ENCODE measurements at regions of chr9 and their contacts with region 1.

Region 1: DNA sequence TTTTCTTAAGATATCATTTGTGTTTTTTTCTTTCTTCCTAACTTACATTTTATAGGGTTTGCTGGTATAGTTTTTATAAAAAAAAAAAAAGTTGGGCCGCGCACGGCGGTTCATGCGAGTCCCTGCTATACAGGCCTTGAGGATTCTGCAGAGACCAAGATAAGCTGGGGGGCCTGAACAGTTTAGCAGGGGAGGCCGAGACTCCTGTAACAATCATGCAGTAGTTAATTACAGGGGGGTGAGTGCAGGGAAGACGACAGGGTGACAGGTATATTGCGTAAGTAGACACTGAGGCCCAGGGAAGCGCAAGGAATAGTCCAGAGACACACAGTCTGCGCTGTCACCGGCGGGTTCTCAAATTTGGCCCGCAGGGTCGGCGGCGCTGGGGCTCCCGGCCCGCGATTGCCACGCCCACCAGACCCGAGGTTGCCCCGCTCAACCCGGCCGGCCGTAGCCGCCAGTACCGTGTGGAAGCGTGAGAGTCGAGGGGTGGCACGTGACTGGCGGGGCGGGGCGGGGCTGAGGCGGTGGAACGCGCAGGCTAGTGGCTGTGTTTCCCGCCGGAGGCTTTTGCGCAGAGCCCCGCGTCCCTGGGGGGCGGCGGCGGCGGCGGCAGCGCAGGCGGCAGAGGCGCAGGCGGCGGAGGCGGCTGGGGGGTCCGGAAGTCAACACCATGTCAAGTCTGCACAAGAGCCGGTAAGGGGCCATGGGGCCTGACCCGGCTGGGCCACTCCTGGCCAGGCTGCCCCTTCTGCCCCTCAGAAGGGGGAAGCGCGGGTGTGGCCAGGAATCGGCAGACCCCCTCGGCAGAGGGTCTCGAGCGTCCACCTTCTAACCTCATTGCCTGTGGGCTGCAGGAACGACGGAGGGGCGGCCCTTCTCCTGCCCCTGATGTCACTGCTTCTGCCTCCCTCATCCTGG is at the start of gene TBC1D13:
- DNase-seq: peak; percentile 85 to 91 (median 89)
- H3K4me3 ChIP-seq: peak within 1 kb of the TSS; percentile 99
- H3K27ac ChIP-seq: peak within 1 kb of the TSS; percentile 26 to 83
- H3K4me1 ChIP-seq: peaks cover 3% of the 10 kb centered on the region
- H3K27me3 ChIP-seq: no peaks in the 10 kb centered on the region
- CTCF ChIP-seq: peak in 1 of 3 donors; percentile 10
- EP300 ChIP-seq: no peak
- POLR2A ChIP-seq: peak; percentile 59
- total RNA-seq, gene TBC1D13: 10.7 to 31.1 (median 26.3) TPM

Region 2: GRCh38 chr9:128600099-128600498 is 186.8 kb before region 1 on chr9:
- intact Hi-C with region 1: no loop called
- DNase-seq: no peak
- H3K4me3 ChIP-seq: no peak overlapping the region
- H3K27ac ChIP-seq: no peak overlapping the region
- H3K4me1 ChIP-seq: no peaks in the 10 kb centered on the region
- H3K27me3 ChIP-seq: no peaks in the 10 kb centered on the region
- CTCF ChIP-seq: no peak
- EP300 ChIP-seq: no peak
- POLR2A ChIP-seq: no peak

Region 3: DNA sequence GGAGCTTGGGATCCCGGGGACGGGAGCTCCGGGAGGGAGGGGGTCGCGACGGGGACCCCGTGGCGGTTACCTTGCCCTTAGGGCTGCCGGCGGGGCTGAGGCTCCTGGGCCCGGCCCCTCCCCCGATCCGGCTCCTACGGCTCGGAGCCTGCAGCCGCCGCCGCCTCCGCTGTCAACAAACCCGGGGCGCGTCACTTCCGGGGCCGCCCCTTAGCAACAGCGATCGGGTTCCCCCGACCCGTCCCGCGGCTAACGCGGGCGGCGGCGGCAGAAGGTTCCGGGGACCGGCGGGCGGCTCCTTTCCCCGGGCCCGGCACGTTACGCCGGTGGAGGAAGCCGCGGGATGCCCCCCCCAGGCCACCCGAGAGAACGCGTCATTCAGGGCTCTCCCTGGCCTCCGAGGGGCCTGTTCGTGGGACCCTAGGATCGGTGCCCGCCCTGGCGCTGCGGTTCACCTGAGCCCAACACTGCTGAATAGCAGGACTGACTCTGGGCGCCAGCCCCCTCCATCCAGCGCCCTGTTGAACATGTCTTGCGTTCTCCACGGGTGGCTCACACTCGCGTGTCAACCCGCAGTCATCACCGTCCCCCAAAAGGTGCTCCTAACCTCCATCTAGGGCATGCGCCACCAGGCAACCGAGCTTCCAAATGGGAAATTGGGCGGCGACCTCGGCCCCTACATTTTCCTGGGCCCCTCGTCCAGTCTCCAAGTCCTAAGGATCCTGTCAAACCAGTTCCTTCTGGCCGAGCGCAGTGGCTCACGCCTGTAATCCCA is 15.0 kb before region 1 on chr9 and contains the start of gene ZER1:
- intact Hi-C with region 1: loop called in 1 of 4 experiments (anchors 2 kb)
- DNase-seq: peak; percentile 91 to 95 (median 93)
- H3K4me3 ChIP-seq: peak within 1 kb of the TSS; percentile 86
- H3K27ac ChIP-seq: peak within 1 kb of the TSS; percentile 70 to 88
- H3K4me1 ChIP-seq: no peaks in the 10 kb centered on the region
- H3K27me3 ChIP-seq: no peaks in the 10 kb centered on the region
- CTCF ChIP-seq: peak in 1 of 3 donors; percentile 11
- EP300 ChIP-seq: no peak
- POLR2A ChIP-seq: peak; percentile 77
- total RNA-seq, gene ZER1: 31.2 to 46.1 (median 34.2) TPM

Region 4: GRCh38 chr9:128805661-128806060 is 18.7 kb after region 1 on chr9:
- intact Hi-C with region 1: no loop called
- DNase-seq: no peak
- H3K4me3 ChIP-seq: no peak overlapping the region
- H3K27ac ChIP-seq: no peak overlapping the region
- H3K4me1 ChIP-seq: no peaks in the 10 kb centered on the region
- H3K27me3 ChIP-seq: no peaks in the 10 kb centered on the region
- CTCF ChIP-seq: no peak
- EP300 ChIP-seq: no peak
- POLR2A ChIP-seq: no peak

Region 5: DNA sequence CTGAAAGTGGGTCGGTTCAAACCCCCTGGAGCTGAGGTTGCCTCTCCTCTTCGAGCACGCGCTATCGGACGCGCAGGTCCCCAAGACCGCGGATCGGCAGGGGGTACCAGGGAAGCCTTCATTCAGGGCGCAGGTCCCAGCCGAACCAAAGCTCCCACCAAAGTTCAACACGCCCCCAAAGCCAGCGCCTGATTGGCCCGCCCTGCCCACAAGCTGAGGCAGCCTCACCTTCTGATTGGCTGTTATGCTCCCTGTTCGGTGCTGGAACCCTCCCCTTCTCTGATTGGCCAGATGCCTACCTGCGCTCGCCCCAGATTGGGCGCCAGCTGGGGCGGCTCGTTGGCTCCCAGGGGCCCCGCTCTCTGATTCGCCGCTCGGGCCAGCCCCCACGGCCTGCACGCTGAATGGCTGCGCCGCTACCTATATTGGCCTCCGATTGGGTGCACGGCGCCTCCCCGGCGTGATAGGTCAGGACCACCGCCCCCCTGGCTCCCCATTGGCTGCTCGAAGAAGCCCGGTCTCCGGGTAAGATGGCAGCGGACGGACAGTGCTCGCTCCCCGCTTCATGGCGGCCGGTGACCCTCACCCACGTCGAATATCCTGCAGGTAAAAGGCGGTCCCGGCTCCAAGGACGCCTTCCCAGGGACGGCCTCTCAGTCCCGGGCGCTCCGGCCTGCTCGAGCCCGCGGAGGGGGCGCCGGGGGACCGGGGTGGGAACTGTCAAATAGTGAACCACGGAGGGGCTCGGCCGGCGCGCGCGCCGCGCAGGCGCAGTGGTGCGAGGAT is 293.9 kb after region 1 on chr9 and contains the start of gene DOLPP1:
- intact Hi-C with region 1: no loop called
- DNase-seq: peak; percentile 98 to 99 (median 98)
- H3K4me3 ChIP-seq: peak within 1 kb of the TSS; percentile 93
- H3K27ac ChIP-seq: peak within 1 kb of the TSS; percentile 0 to 66
- H3K4me1 ChIP-seq: peaks cover 5% of the 10 kb centered on the region
- H3K27me3 ChIP-seq: no peaks in the 10 kb centered on the region
- CTCF ChIP-seq: no peak
- EP300 ChIP-seq: no peak
- POLR2A ChIP-seq: peak; percentile 48
- total RNA-seq, gene DOLPP1: 3.3 to 16.2 (median 9.4) TPM

Measured in ovary (tissue), 10 donors.